Activated B cell treated with CpG ODN at 0.5 μM for 24 hours (primary cell): ENCODE measurements at regions of chr12 and their contacts with region 1.

Region 1: DNA sequence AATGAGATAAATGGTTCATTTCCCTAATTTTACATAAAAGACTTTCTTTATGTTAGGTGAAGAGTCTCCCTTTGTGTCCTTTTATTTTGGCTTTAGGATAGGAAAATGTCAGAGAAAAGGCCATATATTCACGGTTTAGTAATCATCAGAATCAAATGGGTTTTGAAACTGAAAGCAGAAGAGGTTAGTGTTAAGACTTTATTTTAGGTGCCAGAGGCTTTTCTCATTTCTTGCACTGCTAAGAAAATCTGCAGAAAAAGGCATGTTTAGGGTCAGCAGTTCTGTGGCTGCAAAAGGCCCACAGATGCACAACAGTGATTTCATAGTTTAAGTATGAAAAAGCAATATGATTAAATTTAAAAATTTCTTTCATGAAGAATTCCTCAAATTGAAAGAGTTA is 80.4 kb upstream of the SINHCAF start:
- DNase-seq: no peak
- ATAC-seq: peak; percentile 39
- H3K4me3 Mint-ChIP-seq: peak overlapping the region; percentile 65
- H3K27ac Mint-ChIP-seq: peak overlapping the region; percentile 77
- H3K4me1 Mint-ChIP-seq: peaks cover 33% of the 10 kb centered on the region
- H3K27me3 Mint-ChIP-seq: no peaks in the 10 kb centered on the region
- CTCF ChIP-seq: no peak

Region 2: GRCh38 chr12:31536672-31537071 is 130.3 kb after region 1 on chr12:
- CTCF ChIA-PET with region 1: no interaction called
- POLR2A ChIA-PET with region 1: no interaction called
- intact Hi-C with region 1: no loop called
- DNase-seq: no peak
- ATAC-seq: no peak
- H3K4me3 Mint-ChIP-seq: no peak overlapping the region
- H3K27ac Mint-ChIP-seq: no peak overlapping the region
- H3K4me1 Mint-ChIP-seq: peaks cover 80% of the 10 kb centered on the region
- H3K27me3 Mint-ChIP-seq: no peaks in the 10 kb centered on the region
- CTCF ChIP-seq: no peak

Region 3: DNA sequence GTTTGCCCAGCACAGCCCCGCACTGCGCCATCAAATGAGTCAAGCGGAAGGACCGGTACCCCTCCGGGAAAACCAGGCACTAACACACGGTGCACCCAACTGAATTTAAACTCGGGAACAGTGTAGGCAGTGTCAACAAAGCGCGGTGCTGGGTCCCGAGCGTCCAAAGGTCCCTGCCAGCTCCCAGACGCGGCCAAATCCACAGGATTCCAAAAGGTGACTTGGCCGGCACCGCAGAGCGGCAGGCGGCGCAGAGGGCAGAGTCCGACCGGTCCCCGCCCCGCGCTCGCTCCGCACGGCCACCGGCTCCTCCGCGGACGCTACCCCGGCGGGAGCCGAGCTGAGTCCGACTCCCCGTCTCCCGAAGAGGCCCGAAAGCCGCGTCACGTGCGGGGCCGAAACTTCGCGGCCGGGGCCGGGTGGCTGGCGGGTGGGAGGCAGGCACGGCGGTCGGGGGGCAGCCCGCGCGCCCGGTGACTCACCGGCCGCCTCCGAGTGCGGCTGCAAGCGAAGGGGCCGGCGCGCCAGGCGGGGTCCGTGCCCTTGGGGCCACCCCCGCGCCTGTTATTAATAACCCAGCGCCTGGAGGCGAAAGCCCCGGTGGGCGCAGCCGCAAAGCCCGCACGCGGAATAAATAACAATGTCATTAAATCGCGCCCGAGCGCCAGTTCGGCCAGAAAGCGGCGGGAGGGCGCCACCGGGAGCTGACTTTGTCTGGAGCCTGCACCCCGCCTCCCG is 183.7 kb after region 1 on chr12:
- CTCF ChIA-PET with region 1: interaction called, 3 read pairs
- POLR2A ChIA-PET with region 1: interaction called, 32 read pairs
- intact Hi-C with region 1: loop called (anchors 1 kb)
- DNase-seq: peak; percentile 75
- ATAC-seq: peak; percentile 70
- H3K4me3 Mint-ChIP-seq: peak overlapping the region; percentile 96
- H3K27ac Mint-ChIP-seq: peak overlapping the region; percentile 94
- H3K4me1 Mint-ChIP-seq: peaks cover 60% of the 10 kb centered on the region
- H3K27me3 Mint-ChIP-seq: no peaks in the 10 kb centered on the region
- CTCF ChIP-seq: no peak

Region 4: GRCh38 chr12:31650927-31651326 is 244.6 kb after region 1 on chr12:
- CTCF ChIA-PET with region 1: interaction called, 34 read pairs
- POLR2A ChIA-PET with region 1: interaction called, 14 read pairs
- intact Hi-C with region 1: loop called (anchors 1 kb)
- DNase-seq: no peak
- ATAC-seq: no peak
- H3K4me3 Mint-ChIP-seq: no peak overlapping the region
- H3K27ac Mint-ChIP-seq: no peak overlapping the region
- H3K4me1 Mint-ChIP-seq: peaks cover 26% of the 10 kb centered on the region
- H3K27me3 Mint-ChIP-seq: no peaks in the 10 kb centered on the region
- CTCF ChIP-seq: no peak

Region 5: DNA sequence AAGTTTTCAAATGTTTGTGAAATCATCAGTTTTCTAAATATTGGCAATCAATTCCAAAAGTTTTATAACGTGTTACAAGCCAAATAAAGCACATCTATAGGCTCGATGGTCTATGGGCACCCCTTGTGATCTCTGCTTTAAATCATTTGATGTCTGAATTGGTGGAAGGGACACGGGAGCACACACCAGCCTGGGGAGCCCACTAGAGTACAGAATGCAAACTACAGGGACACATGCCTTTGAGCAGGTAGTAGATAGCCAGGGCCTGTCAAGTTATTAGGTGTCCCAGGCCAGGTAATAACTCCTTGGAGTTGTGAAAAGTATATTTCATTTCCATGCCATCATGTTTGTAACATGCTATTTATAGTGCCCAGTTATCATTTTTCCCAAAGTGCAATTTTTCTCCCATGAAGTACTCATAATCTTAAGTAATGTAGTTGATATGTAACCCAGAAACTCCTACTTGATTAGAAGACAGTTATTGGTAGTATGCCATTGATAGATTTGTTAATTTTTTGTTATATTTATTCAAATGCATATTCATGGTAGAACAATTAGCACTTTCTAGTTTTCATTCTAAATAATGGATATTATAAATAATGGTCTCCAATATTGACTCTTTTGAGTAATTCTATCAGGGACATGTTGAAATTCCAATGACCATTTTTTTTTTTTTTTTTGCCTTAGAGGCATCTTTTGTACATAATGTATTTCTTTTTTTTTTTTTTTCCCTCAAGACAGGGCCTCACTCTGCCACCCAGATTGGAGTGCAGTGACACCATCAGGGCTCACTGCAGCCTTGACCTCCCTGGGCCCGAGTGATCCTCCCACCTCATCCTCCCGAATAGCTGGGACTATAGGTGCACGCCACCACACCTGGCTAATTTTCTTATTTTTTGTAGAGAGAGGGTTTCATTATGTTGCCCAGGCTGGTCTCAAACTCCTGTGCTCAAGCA is 896.2 kb after region 1 on chr12:
- CTCF ChIA-PET with region 1: no interaction called
- POLR2A ChIA-PET with region 1: no interaction called
- intact Hi-C with region 1: loop called (anchors 2 kb)
- DNase-seq: peak; percentile 21
- ATAC-seq: peak; percentile 99
- H3K4me3 Mint-ChIP-seq: peak overlapping the region; percentile 74
- H3K27ac Mint-ChIP-seq: peak overlapping the region; percentile 78
- H3K4me1 Mint-ChIP-seq: peaks cover 31% of the 10 kb centered on the region
- H3K27me3 Mint-ChIP-seq: no peaks in the 10 kb centered on the region
- CTCF ChIP-seq: no peak

Region 6: GRCh38 chr12:32568241-32568640 is 1161.9 kb after region 1 on chr12:
- CTCF ChIA-PET with region 1: no interaction called
- POLR2A ChIA-PET with region 1: interaction called, 12 read pairs
- intact Hi-C with region 1: no loop called
- DNase-seq: no peak
- ATAC-seq: no peak
- H3K4me3 Mint-ChIP-seq: no peak overlapping the region
- H3K27ac Mint-ChIP-seq: no peak overlapping the region
- H3K4me1 Mint-ChIP-seq: peaks cover 11% of the 10 kb centered on the region
- H3K27me3 Mint-ChIP-seq: no peaks in the 10 kb centered on the region
- CTCF ChIP-seq: no peak